HAP-1 (cell line): ENCODE measurements at regions of chr10 and their contacts with region 1.

Region 1: DNA sequence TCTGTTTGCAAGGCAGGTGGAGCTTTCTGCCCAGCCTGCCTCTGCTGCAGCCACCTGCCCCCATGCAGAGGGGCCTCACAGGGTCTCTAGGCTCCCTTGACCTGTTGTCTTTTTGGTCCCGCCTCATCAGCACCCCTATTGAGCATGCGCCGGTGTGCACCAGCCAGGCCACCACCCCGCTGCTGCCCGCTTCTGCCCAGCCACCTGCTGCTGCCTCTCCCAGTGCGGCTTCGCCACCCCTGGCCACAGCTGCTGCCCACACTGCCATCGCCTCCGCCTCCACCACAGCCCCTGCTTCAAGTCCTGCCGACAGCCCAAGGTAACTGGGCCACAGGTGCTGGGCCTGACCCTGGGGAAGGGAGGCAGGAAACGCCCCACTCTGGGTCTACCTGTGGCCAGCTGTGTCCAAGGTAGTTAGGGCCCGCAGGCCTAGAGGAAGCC is 38.1 kb downstream of the LDB3 start:
- DNase-seq: no peak
- H3K4me3 ChIP-seq: no peak overlapping the region
- H3K4me1 ChIP-seq: peaks cover 8% of the 10 kb centered on the region
- H3K27me3 ChIP-seq: no peaks in the 10 kb centered on the region

Region 2: DNA sequence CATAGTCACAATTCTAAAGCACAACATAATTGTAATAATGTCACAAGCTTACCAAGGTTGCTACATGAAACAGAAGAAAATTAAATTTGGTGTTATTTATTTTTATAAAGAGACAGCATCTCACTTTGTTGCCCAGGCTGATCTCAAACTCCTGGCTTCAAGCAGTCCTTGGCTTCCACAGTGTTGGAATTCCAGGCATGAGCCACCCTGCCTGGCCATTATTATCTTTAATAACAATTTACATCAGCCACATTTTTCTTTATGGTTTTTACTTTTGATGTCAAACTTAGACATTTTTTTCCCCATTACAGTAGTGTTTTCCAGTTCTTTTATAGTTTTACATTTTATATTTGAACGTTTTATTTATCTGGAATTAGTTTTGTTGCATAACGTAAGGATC is 96.7 kb after region 1 on chr10:
- in situ Hi-C with region 1: no loop called
- DNase-seq: no peak
- H3K4me3 ChIP-seq: no peak overlapping the region
- H3K4me1 ChIP-seq: peaks cover 23% of the 10 kb centered on the region
- H3K27me3 ChIP-seq: no peaks in the 10 kb centered on the region

Region 3: GRCh38 chr10:86899670-86900276 is 193.4 kb after region 1 on chr10:
- in situ Hi-C with region 1: loop called (anchors 5 kb)
- DNase-seq: peak; percentile 63 to 80
- H3K4me3 ChIP-seq: no peak overlapping the region
- H3K4me1 ChIP-seq: peaks cover 10% of the 10 kb centered on the region
- H3K27me3 ChIP-seq: no peaks in the 10 kb centered on the region